ENCODE measurements at regions of chr5 and their contacts with region 1.

Region 1: DNA sequence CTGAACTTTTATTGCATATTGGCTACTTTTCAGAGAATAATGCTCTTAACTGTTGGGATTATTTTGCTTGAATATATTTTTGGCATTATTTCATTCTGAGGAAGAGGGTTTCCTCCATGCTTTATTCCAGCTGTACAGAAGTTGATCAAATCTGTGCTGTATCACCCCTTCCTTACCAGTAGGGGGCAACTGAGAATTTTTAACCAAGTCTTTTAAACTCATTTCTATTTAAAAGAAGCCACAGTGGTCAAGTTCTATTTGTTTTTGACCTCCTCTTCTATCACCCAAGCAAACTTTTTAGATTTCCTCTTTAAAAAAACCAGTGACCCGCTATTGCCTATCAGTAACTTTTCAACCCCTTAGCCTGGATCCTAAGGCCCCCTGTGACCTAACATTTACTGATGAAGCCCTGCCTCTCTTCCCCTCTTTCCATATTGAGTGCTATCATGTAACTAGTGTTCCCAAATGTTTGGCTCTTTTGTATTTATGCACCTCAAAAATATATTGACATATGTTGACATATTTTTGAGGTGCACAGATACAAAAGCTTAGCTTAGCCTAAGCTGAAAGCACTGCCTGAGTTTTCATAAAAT is 80.6 kb downstream of the FBXO4 start:
- DNase-seq: no peak
- ATAC-seq: no peak
- H3K4me3 ChIP-seq: no peak overlapping the region
- H3K27ac ChIP-seq: no peak overlapping the region
- H3K4me1 ChIP-seq: no peaks in the 10 kb centered on the region
- H3K27me3 ChIP-seq: no peaks in the 10 kb centered on the region
- CTCF ChIP-seq: peak; percentile 49 to 77 (median 66)
- POLR2A ChIP-seq: no peak

Region 2: GRCh38 chr5:41893074-41893851 is 112.4 kb before region 1 on chr5:
- intact Hi-C with region 1: no loop called
- DNase-seq: no peak
- ATAC-seq: no peak
- H3K4me3 ChIP-seq: no peak overlapping the region
- H3K27ac ChIP-seq: no peak overlapping the region
- H3K4me1 ChIP-seq: no peaks in the 10 kb centered on the region
- H3K27me3 ChIP-seq: peaks cover 0 to 14% (median 0%) of the 10 kb centered on the region in 9 donors
- CTCF ChIP-seq: no peak
- POLR2A ChIP-seq: no peak

Region 3: GRCh38 chr5:42656651-42657015 is 651.0 kb after region 1 on chr5:
- intact Hi-C with region 1: loop called in 1 of 10 experiments (anchors 5 kb)
- DNase-seq: no peak
- ATAC-seq: peak in 2 of 4 donors; percentile 49 to 64
- H3K4me3 ChIP-seq: peak overlapping the region in 8 of 12 donors; percentile 1 to 47 (median 26)
- H3K27ac ChIP-seq: no peak overlapping the region
- H3K4me1 ChIP-seq: peaks cover 0 to 29% (median 14%) of the 10 kb centered on the region in 12 donors
- H3K27me3 ChIP-seq: no peaks in the 10 kb centered on the region
- CTCF ChIP-seq: peak in 10 of 12 donors; percentile 10 to 63 (median 40)
- POLR2A ChIP-seq: no peak

Region 4: GRCh38 chr5:42767491-42768105 is 761.9 kb after region 1 on chr5:
- intact Hi-C with region 1: loop called in 6 of 10 experiments (anchors 5 to 10 kb)
- DNase-seq: no peak
- ATAC-seq: peak in 1 of 4 donors; percentile 52
- H3K4me3 ChIP-seq: no peak overlapping the region
- H3K27ac ChIP-seq: no peak overlapping the region
- H3K4me1 ChIP-seq: peaks cover 0 to 4% (median 0%) of the 10 kb centered on the region in 12 donors
- H3K27me3 ChIP-seq: no peaks in the 10 kb centered on the region
- CTCF ChIP-seq: peak; percentile 27 to 71 (median 58)
- POLR2A ChIP-seq: no peak